ENCODE measurements at regions of chr6 and their contacts with region 1.

Region 1: GRCh38 chr6:34887753-34888513 is at the start of gene TAF11:
- DNase-seq: peak; percentile 96
- ATAC-seq: peak; percentile 93
- total RNA-seq, gene TAF11: 16.6 to 20.5 TPM

Region 2: DNA sequence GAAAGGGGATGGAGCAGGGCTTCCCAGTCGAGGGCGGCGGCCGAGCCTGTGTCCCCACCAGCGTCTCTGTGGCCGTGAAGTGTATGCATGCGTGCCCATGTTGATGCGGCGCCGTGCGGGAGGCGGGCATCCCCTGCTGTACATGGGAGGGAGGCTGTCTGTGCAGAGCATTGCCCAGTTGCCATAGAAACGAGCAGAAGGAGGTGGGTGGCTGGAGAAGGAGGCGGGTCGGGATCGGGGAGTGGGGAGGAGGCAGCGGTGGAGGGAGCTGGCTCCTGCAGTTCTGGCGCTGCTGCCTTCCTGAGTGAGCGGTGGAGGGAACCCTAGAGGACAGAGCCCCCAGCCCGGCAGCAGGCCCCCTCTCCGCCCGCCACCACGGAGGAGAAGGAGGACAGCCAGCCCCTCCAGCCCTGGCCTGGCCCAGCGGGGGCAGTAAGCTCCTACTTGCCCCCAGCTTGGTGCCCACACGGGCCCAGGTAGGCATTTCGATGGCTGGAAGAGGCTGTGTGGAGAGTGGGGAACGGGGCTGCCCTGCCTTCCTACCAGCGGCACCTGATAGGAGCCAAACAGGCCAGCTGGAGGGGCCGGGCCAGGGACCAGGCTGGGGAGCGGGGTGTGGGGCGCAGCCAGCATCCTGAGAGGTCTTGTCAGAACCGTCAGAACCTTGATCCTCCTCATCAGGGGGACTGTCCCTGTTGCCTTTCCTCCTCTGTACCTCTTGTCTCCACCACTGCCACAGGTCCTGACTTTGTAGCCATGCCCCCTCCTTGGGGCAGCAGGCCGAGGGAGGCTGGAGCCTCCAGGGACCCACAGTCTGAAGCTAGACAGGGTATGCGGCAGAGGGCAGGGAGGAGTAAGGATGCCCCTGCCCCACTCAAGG is 373.1 kb before region 1 on chr6:
- intact Hi-C with region 1: no loop called
- DNase-seq: peak; percentile 19
- ATAC-seq: peak; percentile 44 to 57

Region 3: GRCh38 chr6:34757687-34758274 is 130.2 kb before region 1 on chr6:
- intact Hi-C with region 1: no loop called
- DNase-seq: no peak
- ATAC-seq: peak in 1 of 2 donors; percentile 1

Region 4: DNA sequence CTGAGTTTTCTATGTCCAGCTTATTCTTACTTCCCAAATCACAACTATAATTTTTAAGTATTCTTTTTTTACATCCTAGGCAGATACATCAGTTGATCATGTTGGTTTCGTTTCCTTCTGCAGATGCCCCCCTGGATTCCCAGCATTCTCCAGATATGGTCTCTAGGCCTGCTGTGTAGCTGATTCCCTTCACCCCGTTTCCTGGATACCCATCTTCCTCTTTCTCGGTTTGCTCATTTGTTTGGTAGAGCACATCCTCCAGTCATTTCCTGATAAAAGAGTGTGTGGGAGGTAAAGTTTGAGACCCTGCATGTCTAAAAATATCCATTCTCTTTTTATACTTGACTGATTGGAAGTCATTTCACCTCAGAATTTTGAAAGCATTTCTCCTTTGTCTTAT is 67.5 kb after region 1 on chr6:
- intact Hi-C with region 1: loop called in 1 of 2 experiments (anchors 5 kb)
- DNase-seq: no peak
- ATAC-seq: peak in 1 of 2 donors; percentile 21

Region 5: DNA sequence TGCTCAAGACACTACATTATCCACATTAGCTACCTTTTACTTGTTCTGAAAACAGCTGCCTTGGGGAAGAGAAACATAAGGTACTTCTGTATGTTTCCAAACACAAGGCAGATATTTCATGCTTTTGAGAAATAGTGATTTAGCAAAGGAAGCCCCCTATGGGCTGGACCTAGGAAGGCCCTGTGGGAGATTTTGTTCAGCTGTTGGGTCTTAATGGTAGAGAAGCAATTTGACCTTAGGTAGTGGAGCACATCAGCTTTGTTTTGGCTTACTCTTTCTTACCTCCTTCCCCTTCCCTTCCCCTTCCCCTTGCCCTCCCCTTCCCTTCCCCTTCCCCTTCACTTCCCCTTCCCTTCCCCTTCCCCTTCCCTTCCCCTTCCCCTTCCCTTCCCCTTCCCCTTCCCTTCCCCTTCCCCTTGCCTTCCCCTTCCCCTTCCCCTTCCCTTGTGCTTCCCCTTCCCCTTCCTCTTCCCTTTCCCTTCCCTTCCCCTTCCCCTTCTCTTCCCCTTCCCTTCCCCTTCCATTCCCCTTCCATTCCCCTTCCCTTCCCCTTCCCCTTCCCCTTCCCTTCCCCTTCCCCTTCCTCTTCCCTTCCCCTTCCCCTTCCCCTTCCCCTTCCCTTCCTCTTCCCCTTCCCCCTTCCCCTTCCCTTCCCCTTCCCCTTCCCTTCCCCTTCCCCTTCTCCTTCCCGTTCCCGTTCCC is 85.8 kb after region 1 on chr6:
- intact Hi-C with region 1: loop called in 1 of 2 experiments (anchors 10 kb)
- DNase-seq: no peak
- ATAC-seq: no peak